Dendritic cell treated with granulocyte-macrophage colony-stimulating factor and Interleukin-4, amounts not matched to agents 40 ng/mL and 50 ng/mL, for 4 days (primary cell): ENCODE measurements at regions of chr2 and their contacts with region 1.

Region 1: DNA sequence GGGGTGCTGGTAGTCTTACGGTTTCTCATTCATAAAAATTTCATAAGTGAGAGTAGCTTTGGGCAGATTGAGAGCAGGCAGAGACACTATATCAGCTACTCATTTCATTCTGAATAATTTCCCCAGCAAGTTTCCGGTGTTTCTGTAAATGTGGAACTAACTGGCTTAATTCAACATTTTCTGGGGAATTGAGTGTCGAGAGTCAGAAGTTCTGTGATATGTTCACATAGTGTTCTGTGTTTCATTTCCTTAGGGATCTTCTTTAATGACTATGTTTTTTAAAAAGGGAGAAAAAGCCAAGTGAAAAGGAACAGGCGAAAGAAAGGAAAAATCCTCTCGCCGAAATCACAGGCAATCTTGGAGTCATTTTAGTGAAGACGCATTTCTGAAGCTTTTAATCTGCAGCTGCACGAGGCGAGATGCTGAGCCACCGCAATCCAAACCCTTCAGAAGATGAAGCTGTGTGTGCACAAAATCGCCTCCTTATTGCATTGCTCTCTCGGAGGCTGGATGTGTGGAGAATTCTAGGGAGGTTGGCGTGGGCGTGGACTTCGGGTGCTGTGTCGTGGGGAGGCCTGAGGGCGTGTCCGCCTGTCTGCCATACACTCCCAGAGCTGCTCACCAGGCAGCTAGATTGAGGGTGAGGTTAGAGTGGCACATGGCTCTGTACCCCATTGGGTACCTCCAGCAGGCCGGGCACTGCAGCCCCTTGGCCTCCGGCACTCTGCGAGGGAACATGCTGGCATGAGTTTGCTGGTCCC is 38.4 kb upstream of the HDAC4 start:
- H3K4me3 Mint-ChIP-seq: peak overlapping the region; percentile 37
- H3K27ac Mint-ChIP-seq: peak overlapping the region; percentile 81
- H3K4me1 Mint-ChIP-seq: peaks cover 72% of the 10 kb centered on the region
- H3K27me3 Mint-ChIP-seq: peaks cover 26% of the 10 kb centered on the region

Region 2: DNA sequence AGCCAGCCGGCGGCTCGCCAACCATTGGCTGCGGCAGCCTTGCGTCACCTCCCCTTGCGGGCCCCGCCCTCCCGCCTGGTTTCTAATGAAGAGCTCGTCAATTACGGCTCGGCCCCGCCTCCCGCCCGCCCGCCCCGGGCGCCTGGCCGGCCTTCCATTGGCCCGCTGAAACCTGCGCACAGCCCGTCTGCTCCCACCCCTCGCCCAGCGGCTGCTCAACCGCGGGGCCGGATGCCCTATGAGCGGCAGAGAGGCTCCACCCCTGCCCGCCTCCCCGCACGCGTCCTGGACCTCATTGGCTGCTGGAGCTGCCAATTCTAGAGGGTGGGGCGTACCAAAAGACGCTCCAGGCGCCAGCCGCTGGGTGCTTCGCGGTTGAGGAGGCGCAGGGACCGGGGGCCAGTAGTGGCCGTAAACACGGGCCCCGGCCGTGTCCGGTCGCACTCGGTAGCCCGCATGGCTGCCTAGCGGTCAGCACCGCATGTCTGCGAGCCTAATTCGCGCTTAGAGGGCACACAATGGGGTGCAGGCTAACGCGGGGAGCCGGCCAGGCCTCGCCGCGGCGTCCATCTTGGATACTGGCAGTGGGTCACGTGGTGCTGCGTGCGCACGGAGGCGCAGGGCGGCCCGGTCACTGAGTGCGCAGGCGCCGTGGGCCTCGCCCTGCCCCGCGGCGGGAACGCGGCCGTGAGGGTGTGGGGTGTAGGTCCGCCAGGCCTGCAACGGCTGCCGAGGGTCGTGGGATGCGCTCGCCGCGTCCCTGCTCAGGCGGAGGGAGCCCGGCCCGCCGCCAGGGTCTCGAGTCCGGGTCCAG is 37.9 kb before region 1 on chr2:
- intact Hi-C with region 1: loop called (anchors 5 kb)
- H3K4me3 Mint-ChIP-seq: peak overlapping the region; percentile 86
- H3K27ac Mint-ChIP-seq: peak overlapping the region; percentile 100
- H3K4me1 Mint-ChIP-seq: peaks cover 40% of the 10 kb centered on the region
- H3K27me3 Mint-ChIP-seq: peaks cover 3% of the 10 kb centered on the region

Region 3: GRCh38 chr2:239465017-239466001 is 26.1 kb after region 1 on chr2:
- intact Hi-C with region 1: loop called (anchors 1 kb)
- H3K4me3 Mint-ChIP-seq: peak overlapping the region; percentile 55
- H3K27ac Mint-ChIP-seq: no peak overlapping the region
- H3K4me1 Mint-ChIP-seq: peaks cover 39% of the 10 kb centered on the region
- H3K27me3 Mint-ChIP-seq: peaks cover 6% of the 10 kb centered on the region

Region 4: GRCh38 chr2:239533569-239534316 is 94.6 kb after region 1 on chr2:
- intact Hi-C with region 1: no loop called
- H3K4me3 Mint-ChIP-seq: no peak overlapping the region
- H3K27ac Mint-ChIP-seq: no peak overlapping the region
- H3K4me1 Mint-ChIP-seq: peaks cover 20% of the 10 kb centered on the region
- H3K27me3 Mint-ChIP-seq: peaks cover 25% of the 10 kb centered on the region